H1 (cell line): ENCODE measurements at regions of chr18 and their contacts with region 1.

Region 1: DNA sequence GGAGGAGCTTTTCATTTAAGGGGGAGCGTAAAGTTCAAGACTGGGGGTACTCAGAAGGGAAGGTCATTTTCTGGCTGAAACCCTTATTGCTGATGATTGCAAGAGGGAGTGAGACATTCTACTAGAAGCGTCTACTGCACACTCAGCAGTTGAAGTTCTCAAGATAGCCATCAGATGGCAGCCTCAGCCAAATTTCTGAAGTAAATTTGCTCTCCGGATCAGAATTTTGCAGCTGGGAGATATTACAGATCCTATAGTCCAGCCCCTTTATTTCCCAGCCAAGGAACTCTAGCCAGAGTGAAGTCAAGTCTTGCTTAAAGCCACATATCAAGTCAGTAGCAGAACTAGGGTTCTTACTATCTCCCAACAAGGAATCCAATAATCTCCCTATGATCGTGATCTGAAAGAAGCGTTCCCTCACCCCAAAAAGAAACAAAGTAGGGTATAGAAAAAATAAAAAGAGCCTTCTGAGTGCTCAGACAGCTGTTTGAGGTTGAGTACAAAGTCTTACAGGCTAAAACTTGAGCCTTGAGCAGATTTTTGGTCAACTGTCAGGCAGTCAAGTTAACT is 24.0 kb downstream of the RAX start:
- DNase-seq: peak in 1 of 2 experiments; percentile 66
- H3K4me3 ChIP-seq: no peak overlapping the region
- H3K27ac ChIP-seq: no peak overlapping the region
- H3K4me1 ChIP-seq: no peaks in the 10 kb centered on the region
- H3K27me3 ChIP-seq: no peaks in the 10 kb centered on the region
- CTCF ChIP-seq: peak in 2 of 3 experiments; percentile 81 to 84; a peak in 3 of 4 replicates
- EP300 ChIP-seq: no peak
- POLR2A ChIP-seq: no peak
- RAD21 ChIP-seq: peak; percentile 85 to 93

Region 2: GRCh38 chr18:58928386-58928785 is 320.9 kb before region 1 on chr18:
- CTCF ChIA-PET with region 1: no interaction called
- POLR2A ChIA-PET with region 1: no interaction called
- DNase-seq: no peak
- H3K4me3 ChIP-seq: 0 out of 8 replicates have a peak overlapping the region, but pooled peaks of 1 of the 4 experiments have one; percentile 3
- H3K27ac ChIP-seq: peak overlapping the region; percentile 1; the same call in 1 of the 2 replicates
- H3K4me1 ChIP-seq: peaks cover 10 to 21% (median 15%) of the 10 kb centered on the region in 4 experiments
- H3K27me3 ChIP-seq: no peaks in the 10 kb centered on the region
- CTCF ChIP-seq: no peak
- EP300 ChIP-seq: no peak
- POLR2A ChIP-seq: no peak
- RAD21 ChIP-seq: no peak

Region 3: GRCh38 chr18:59109375-59109774 is 139.9 kb before region 1 on chr18:
- CTCF ChIA-PET with region 1: no interaction called
- POLR2A ChIA-PET with region 1: no interaction called
- DNase-seq: no peak
- H3K4me3 ChIP-seq: no peak overlapping the region
- H3K27ac ChIP-seq: no peak overlapping the region
- H3K4me1 ChIP-seq: no peaks in the 10 kb centered on the region
- H3K27me3 ChIP-seq: no peaks in the 10 kb centered on the region
- CTCF ChIP-seq: no peak
- EP300 ChIP-seq: no peak
- POLR2A ChIP-seq: no peak
- RAD21 ChIP-seq: no peak

Region 4: GRCh38 chr18:59159986-59160385 is 89.3 kb before region 1 on chr18:
- CTCF ChIA-PET with region 1: no interaction called
- POLR2A ChIA-PET with region 1: no interaction called
- DNase-seq: no peak
- H3K4me3 ChIP-seq: no peak overlapping the region
- H3K27ac ChIP-seq: no peak overlapping the region
- H3K4me1 ChIP-seq: no peaks in the 10 kb centered on the region
- H3K27me3 ChIP-seq: no peaks in the 10 kb centered on the region; a peak in 1 of 7 replicates
- CTCF ChIP-seq: no peak
- EP300 ChIP-seq: no peak
- POLR2A ChIP-seq: no peak
- RAD21 ChIP-seq: no peak

Region 5: DNA sequence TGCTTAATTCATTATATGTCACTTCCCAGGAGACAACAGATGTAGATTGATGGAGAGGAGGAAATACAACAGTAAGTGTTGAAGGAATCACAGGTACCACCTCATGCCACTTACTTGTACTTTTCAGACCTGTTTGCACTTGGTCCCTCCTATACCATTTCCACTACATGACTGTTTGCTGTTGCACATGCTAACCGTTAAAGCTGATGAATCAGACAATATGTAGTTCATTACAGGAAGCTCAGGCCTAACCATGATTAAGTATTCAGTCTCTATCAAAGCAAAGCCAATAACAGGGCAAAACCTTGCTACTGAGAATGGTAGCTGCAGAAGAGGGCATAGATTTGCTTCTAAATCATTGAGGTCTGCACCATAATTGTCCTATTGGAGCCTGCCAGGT is 59.5 kb before region 1 on chr18:
- CTCF ChIA-PET with region 1: no interaction called
- POLR2A ChIA-PET with region 1: no interaction called
- DNase-seq: no peak
- H3K4me3 ChIP-seq: no peak overlapping the region
- H3K27ac ChIP-seq: no peak overlapping the region
- H3K4me1 ChIP-seq: no peaks in the 10 kb centered on the region
- H3K27me3 ChIP-seq: no peaks in the 10 kb centered on the region
- CTCF ChIP-seq: no peak
- EP300 ChIP-seq: no peak
- POLR2A ChIP-seq: no peak
- RAD21 ChIP-seq: no peak

Region 6: DNA sequence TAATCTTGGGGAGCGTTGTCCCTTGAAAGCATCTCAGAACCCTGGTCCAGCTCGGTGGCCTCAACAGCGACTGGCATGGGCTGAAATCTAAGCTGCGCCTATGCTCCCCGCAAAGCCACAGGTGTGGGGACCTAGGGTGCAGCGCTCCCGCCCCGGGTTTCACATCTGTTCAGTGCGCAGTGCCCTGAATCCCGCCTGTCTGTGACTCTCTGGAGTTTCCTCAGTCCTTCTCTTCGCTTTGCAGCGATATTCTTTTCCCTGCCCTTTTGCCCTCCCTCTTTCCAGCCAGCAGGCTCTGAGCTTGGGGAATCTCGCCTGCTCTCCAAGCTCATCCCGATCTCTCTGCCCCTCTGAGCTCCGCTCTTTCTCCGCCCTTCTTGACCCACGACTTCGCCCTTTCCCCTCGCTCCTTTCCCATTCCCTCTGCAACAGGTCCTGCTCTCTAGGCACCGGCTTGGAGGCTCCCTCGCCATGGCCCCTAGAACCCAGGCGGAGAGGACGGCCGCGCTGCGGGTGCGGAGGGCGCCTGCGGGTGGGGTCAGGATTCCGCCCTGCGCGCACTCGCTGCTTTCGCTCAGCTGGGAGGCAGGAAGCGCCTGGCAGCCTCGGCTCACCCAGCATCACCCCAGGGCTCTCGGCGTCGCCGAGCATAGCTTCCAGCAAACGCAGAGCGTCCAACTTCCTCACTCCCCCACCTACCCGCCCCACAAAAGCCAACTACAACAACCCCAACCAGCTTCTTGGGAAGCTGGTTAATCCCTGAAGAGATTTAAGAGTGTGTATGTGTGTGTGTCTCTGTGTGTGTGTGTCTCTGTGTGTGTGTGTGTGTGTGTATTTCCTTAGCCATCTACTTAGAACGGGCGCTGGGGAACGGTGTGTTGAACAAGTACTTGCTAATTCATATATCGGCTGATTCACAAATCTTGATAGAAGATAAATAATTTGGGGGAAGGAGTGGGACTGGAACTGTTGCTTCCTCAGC is 28.2 kb before region 1 on chr18:
- CTCF ChIA-PET with region 1: interaction called, 14 read pairs
- POLR2A ChIA-PET with region 1: no interaction called
- DNase-seq: peak in 1 of 2 experiments; percentile 70
- H3K4me3 ChIP-seq: peak overlapping the region; percentile 45 to 71 (median 56)
- H3K27ac ChIP-seq: no peak overlapping the region
- H3K4me1 ChIP-seq: peaks cover 0 to 14% (median 7%) of the 10 kb centered on the region in 4 experiments; a peak in 5 of 7 replicates
- H3K27me3 ChIP-seq: peaks cover 46 to 66% (median 57%) of the 10 kb centered on the region in 4 experiments
- CTCF ChIP-seq: no peak
- EP300 ChIP-seq: no peak
- POLR2A ChIP-seq: no peak
- RAD21 ChIP-seq: no peak

Region 7: GRCh38 chr18:59238385-59238784 is 10.9 kb before region 1 on chr18:
- CTCF ChIA-PET with region 1: interaction called, 33 read pairs
- POLR2A ChIA-PET with region 1: no interaction called
- DNase-seq: no peak
- H3K4me3 ChIP-seq: no peak overlapping the region
- H3K27ac ChIP-seq: no peak overlapping the region
- H3K4me1 ChIP-seq: no peaks in the 10 kb centered on the region
- H3K27me3 ChIP-seq: peaks cover 0 to 1% (median 0%) of the 10 kb centered on the region in 4 experiments; a peak in 2 of 7 replicates
- CTCF ChIP-seq: no peak
- EP300 ChIP-seq: no peak
- POLR2A ChIP-seq: no peak
- RAD21 ChIP-seq: no peak

Region 8: GRCh38 chr18:59300676-59301285 is 51.5 kb after region 1 on chr18:
- CTCF ChIA-PET with region 1: interaction called, 18 read pairs
- POLR2A ChIA-PET with region 1: no interaction called
- DNase-seq: no peak
- H3K4me3 ChIP-seq: no peak overlapping the region
- H3K27ac ChIP-seq: no peak overlapping the region
- H3K4me1 ChIP-seq: no peaks in the 10 kb centered on the region
- H3K27me3 ChIP-seq: peaks cover 0 to 2% (median 0%) of the 10 kb centered on the region in 4 experiments; a peak in 2 of 7 replicates
- CTCF ChIP-seq: no peak
- EP300 ChIP-seq: no peak
- POLR2A ChIP-seq: no peak
- RAD21 ChIP-seq: no peak

Region 9: DNA sequence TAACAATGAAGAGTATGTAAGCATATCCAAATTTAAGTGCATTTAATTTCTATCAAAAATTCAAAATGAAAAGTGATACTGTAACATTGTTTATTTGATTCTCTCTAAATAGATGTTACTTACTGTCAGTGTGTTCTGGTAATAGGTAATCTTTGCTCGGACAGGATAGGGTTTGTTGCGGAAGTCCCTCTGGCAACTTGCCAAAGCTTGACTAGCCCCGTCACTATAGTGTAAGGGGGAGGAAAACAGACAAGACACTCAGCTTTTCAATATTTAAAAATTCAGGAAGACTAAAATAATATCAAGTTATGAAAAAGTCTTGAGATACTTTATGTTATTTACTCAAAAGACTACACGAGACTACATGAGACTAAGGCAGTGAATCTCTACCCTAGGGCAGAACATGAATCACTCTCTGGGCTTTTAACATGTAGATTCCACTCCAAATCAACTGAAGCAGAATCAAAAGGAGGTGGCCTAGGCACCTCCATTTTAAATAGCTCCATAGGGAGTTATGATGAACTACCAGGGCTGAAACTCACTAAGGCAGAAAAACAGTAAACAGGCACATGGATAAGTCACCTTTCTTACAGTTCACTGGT is 103.9 kb after region 1 on chr18:
- CTCF ChIA-PET with region 1: interaction called, 16 read pairs
- POLR2A ChIA-PET with region 1: interaction called, 3 read pairs
- DNase-seq: no peak
- H3K4me3 ChIP-seq: no peak overlapping the region
- H3K27ac ChIP-seq: no peak overlapping the region
- H3K4me1 ChIP-seq: no peaks in the 10 kb centered on the region; a peak in 2 of 7 replicates
- H3K27me3 ChIP-seq: no peaks in the 10 kb centered on the region
- CTCF ChIP-seq: no peak
- EP300 ChIP-seq: no peak
- POLR2A ChIP-seq: no peak
- RAD21 ChIP-seq: no peak